PC-9 (cell line): ENCODE measurements at regions of chr16 and their contacts with region 1.

Region 1: DNA sequence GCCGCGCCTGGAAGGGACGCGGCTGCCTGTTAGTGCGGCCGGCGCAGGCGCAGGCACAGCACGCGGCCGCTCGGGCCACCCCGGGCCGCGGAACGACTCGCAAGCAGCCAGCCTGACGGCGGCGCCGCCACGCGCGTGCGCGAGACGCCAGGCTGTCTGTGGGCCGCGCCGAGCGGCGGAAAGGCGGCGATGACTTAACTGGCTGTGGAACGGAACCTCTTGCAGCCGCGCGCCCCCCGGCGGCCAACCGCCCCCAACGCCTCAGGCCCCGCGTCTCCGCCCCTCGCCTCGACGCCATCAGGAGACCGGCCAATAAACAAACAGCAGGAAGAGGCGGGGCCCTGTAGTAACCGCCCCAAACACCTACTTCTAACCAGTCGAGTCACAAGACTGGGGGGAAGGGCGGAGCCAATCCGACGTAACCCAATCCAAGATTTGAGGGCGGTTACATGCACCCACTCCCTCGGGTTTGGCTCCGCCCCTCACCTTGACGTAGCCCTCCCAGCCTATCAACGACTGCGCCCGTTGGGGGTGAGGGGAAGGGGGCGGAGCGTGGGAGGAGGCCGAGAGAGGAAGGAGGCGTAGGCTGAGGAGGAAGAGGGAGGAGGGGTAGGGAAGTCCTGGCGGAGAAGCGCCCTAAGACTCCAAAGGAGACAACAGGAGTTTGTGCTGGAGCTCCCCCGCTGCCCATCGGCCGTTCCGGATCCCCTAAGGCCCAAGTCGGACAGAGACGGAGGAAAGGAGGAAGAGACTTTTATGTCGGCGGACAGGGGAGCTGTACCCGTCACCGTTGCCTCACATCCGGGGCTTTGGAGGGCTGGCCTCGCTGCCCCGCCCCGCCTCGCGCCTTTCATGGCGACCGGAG is at the start of gene FBRS:
- DNase-seq: peak; percentile 100
- H3K4me3 ChIP-seq: peak within 1 kb of the TSS; percentile 68
- H3K27ac ChIP-seq: peak within 1 kb of the TSS; percentile 86
- H3K4me1 ChIP-seq: peaks cover 26% of the 10 kb centered on the region
- H3K27me3 ChIP-seq: no peaks in the 10 kb centered on the region
- CTCF ChIP-seq: peak; percentile 66
- total RNA-seq, gene FBRS: 87.5 and 128 TPM in 2 replicates

Region 2: GRCh38 chr16:30065143-30065850 is 592.8 kb before region 1 on chr16 and contains the start of gene ALDOA:
- CTCF ChIA-PET with region 1: no interaction called
- POLR2A ChIA-PET with region 1: interaction called, 3 read pairs
- intact Hi-C with region 1: loop called (anchors 5 kb)
- DNase-seq: peak; percentile 95 to 100
- H3K4me3 ChIP-seq: peak within 1 kb of the TSS; percentile 94
- H3K27ac ChIP-seq: peak within 1 kb of the TSS; percentile 92
- H3K4me1 ChIP-seq: peaks cover 50% of the 10 kb centered on the region
- H3K27me3 ChIP-seq: no peaks in the 10 kb centered on the region
- CTCF ChIP-seq: no peak
- total RNA-seq, gene ALDOA: 2,395 and 3,090 TPM in 2 replicates

Region 3: GRCh38 chr16:30355144-30355894 is 302.8 kb before region 1 on chr16 and contains the start of gene CD2BP2:
- CTCF ChIA-PET with region 1: no interaction called
- POLR2A ChIA-PET with region 1: no interaction called
- intact Hi-C with region 1: loop called (anchors 1 kb)
- DNase-seq: peak; percentile 97 to 99
- H3K4me3 ChIP-seq: peak within 1 kb of the TSS; percentile 99
- H3K27ac ChIP-seq: peak within 1 kb of the TSS; percentile 82
- H3K4me1 ChIP-seq: peaks cover 19% of the 10 kb centered on the region
- H3K27me3 ChIP-seq: no peaks in the 10 kb centered on the region
- CTCF ChIP-seq: no peak
- total RNA-seq, gene CD2BP2: 84.6 TPM in 2 replicates

Region 4: DNA sequence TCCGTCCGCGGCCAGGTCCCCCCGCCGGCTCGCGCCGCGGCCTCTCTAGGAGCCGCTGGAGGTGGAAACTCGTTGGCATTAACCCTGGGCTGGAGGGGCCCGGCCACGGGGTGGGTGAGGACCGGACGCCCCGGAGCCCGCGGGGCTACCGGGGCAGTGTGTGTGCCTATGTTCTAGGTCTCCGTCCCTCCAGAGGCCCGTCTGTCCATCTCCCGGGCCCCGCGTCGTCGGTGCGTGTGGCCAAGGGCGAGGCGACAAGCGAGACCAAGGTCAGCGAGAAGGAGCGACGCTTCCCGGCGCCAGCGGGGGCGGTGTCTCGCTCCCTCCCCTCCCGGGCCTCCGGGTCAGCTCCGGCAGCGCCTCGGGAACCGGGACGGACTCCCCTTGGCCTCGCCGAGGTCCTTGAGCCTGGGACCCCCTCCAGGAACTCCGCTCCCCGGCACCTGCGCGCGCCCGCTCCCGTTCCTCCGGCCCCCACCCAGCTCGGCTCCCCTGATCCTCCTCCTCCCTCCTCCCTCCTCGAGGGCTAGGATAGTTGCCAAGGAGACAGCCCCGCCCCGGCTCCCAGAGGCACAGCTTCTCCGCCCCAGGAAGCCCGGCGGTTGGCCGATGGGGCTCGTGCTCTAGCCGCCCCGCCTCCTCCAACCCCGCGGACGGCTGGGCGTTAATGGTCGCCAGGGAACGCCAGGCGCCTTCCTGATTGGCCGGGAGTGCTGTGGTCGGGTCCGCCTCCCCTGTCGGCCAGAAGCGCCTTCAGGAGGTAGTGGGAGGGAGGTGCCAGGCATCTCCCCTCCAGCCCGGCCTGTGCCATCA is 131.1 kb before region 1 on chr16:
- CTCF ChIA-PET with region 1: no interaction called
- POLR2A ChIA-PET with region 1: no interaction called
- intact Hi-C with region 1: loop called (anchors 1 kb)
- DNase-seq: peak; percentile 94 to 100
- H3K4me3 ChIP-seq: peak overlapping the region; percentile 97
- H3K27ac ChIP-seq: peak overlapping the region; percentile 79
- H3K4me1 ChIP-seq: peaks cover 32% of the 10 kb centered on the region
- H3K27me3 ChIP-seq: no peaks in the 10 kb centered on the region
- CTCF ChIP-seq: peak; percentile 50; the same call in 1 of the 2 replicates

Region 5: GRCh38 chr16:30609926-30610839 is 47.9 kb before region 1 on chr16 and contains the start of gene ZNF689:
- CTCF ChIA-PET with region 1: no interaction called
- POLR2A ChIA-PET with region 1: no interaction called
- intact Hi-C with region 1: no loop called
- DNase-seq: peak; percentile 88 to 98
- H3K4me3 ChIP-seq: peak within 1 kb of the TSS; percentile 89
- H3K27ac ChIP-seq: peak within 1 kb of the TSS; percentile 49
- H3K4me1 ChIP-seq: peaks cover 5% of the 10 kb centered on the region; the same call in 1 of the 2 replicates
- H3K27me3 ChIP-seq: no peaks in the 10 kb centered on the region
- CTCF ChIP-seq: no peak; the same call in 1 of the 2 replicates
- total RNA-seq, gene ZNF689: 9.1 and 10.1 TPM in 2 replicates

Region 6: GRCh38 chr16:30628627-30629540 is 29.2 kb before region 1 on chr16:
- CTCF ChIA-PET with region 1: interaction called, 3 read pairs
- POLR2A ChIA-PET with region 1: interaction called, 5 read pairs
- intact Hi-C with region 1: loop called (anchors 1 kb)
- DNase-seq: peak; percentile 60 to 89
- H3K4me3 ChIP-seq: peak overlapping the region; percentile 33; the same call in 1 of the 2 replicates
- H3K27ac ChIP-seq: no peak overlapping the region
- H3K4me1 ChIP-seq: peaks cover 10% of the 10 kb centered on the region; the same call in 1 of the 2 replicates
- H3K27me3 ChIP-seq: no peaks in the 10 kb centered on the region
- CTCF ChIP-seq: peak; percentile 96

Region 7: GRCh38 chr16:30703971-30704370 is 45.9 kb after region 1 on chr16:
- CTCF ChIA-PET with region 1: no interaction called
- POLR2A ChIA-PET with region 1: no interaction called
- intact Hi-C with region 1: no loop called
- DNase-seq: no peak
- H3K4me3 ChIP-seq: no peak overlapping the region
- H3K27ac ChIP-seq: no peak overlapping the region
- H3K4me1 ChIP-seq: peaks cover 14% of the 10 kb centered on the region
- H3K27me3 ChIP-seq: no peaks in the 10 kb centered on the region
- CTCF ChIP-seq: no peak

Region 8: DNA sequence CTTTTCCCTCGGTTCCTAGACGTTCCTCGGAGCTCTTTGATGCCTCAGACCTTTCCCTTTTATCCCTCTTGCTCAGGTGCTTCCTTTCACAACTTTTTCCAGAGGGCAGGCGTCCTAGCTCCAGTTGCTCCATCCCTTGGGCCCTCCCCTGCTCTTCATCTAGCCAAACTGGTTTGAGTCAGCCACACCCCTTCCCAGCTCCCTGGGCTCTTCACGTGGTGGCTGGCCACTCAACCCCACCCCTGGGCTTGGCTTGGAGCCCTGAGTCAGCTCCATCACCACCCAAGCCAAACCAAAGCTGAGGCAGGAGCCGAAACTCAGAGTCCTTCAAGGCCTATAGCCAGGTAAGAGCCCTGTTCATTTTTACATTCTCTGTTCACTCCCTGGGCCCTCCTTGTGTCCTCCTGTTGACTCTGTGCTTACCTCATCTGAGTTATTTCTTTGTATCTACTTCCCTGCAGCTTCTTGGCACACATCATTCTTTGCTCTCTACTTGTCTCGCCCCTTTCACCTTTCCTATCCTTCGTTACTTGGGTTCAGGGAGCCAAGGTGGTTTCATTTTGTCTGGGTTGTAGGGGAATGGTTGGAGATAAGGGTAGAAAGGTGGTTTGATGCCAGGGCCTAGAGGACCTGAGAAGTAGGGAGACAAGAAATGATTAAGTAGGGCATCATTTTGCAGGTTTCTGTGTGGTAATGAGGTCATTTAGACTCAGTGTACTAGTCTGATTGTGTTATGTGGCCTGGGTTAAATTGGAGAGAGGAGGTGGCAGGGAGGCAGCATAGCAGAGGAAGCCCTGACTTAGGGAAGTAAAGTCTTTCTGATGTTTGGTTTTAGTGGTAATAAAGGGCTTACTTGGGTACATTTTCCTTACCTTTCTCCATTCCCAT is 82.5 kb after region 1 on chr16:
- CTCF ChIA-PET with region 1: interaction called, 5 read pairs
- POLR2A ChIA-PET with region 1: interaction called, 3 read pairs
- intact Hi-C with region 1: loop called (anchors 1 kb)
- DNase-seq: peak; percentile 98
- H3K4me3 ChIP-seq: peak overlapping the region; percentile 68
- H3K27ac ChIP-seq: peak overlapping the region; percentile 96
- H3K4me1 ChIP-seq: peaks cover 33% of the 10 kb centered on the region
- H3K27me3 ChIP-seq: no peaks in the 10 kb centered on the region
- CTCF ChIP-seq: 0 out of 2 replicates have a peak, but pooled peaks have one; percentile 17

Region 9: DNA sequence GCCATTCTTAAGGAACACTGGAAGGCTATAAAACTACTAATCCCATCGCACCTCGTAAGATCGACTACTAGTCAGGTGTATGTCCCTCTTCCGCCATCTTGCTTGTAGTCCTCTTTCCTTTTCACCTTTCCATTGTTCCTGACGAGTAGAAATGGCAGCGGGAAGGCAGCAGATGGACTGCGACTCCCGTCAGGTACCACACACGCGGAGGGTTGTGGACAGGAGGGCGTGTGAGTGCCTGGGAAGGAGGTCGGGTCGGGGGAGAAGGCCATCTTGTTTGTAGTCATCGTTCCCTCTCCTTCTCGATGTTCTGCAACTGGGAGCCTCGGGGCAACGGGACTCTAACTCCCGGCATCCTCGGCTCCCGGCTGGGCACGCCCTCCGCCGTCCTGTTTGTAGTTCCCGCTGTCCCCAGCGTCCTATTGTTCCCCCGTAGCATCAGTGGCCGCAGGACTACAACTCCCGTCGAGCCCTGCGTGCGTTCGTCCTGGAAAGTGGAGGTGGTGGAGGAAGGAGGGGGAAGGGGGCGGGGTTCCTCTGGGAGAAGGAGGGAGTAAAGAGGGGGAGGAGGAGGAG is 264.9 kb after region 1 on chr16:
- CTCF ChIA-PET with region 1: no interaction called
- POLR2A ChIA-PET with region 1: no interaction called
- intact Hi-C with region 1: loop called (anchors 1 kb)
- DNase-seq: peak; percentile 98 to 100
- H3K4me3 ChIP-seq: peak overlapping the region; percentile 83
- H3K27ac ChIP-seq: peak overlapping the region; percentile 90
- H3K4me1 ChIP-seq: no peaks in the 10 kb centered on the region; the same call in 1 of the 2 replicates
- H3K27me3 ChIP-seq: no peaks in the 10 kb centered on the region
- CTCF ChIP-seq: no peak

Region 10: DNA sequence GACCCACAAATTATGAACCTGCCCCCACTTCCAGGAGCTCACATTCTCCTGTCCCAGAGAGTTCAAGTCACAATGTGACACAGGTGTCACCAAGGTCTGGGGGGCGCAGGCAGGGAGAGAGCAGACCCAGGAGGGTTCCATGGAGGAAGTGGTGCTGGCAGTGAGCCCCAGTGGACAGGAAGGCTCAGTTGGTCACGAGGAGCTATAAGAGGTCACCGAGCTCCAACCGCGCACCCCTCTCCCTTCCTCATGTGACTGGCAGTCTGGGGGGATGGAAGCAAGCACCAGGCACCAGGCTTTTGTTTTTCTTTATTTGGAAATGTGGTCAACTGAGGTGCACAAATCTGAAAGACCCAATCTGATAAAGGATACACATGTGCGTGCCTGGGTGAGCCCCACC is 737.5 kb after region 1 on chr16:
- CTCF ChIA-PET with region 1: no interaction called
- POLR2A ChIA-PET with region 1: no interaction called
- intact Hi-C with region 1: no loop called
- DNase-seq: no peak
- H3K4me3 ChIP-seq: no peak overlapping the region
- H3K27ac ChIP-seq: no peak overlapping the region
- H3K4me1 ChIP-seq: no peaks in the 10 kb centered on the region
- H3K27me3 ChIP-seq: no peaks in the 10 kb centered on the region
- CTCF ChIP-seq: no peak